Endothelial cell of umbilical vein (primary cell): ENCODE measurements at regions of chr18 and their contacts with region 1.

Region 1: DNA sequence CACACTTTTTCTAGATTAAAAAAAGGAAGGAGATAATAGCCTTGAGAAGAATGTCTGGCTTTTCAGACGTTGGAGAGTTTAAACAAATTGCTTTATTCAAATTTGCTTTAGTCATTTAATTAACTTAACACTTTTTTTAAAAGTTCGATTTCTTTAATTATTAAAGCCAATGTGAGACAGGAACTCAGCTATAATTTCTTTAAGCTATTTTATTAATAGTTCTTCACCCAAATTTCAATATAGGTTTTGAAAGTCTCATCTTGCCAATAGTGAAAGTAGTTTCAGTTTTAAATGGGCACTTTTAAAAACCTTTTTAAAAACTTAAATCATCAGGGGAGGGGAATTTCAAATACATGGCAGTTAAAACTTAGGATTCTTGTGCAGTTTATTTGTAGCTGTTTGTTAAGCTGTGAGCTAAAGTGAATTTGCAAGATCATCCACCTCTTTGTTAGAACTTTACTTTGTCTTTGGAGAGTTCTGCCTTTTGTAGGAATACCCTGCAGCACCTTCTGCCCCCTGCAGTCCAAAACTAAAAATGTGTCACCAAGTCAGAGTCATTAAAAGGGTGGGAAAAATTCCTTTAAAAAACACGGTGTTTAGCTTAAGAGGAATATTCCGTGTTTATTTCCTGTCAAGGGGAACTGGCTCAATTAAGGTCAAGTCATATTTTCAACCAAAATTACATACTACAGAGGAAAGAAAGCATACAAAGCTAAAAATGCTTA is 4.6 kb downstream of the TGIF1 start:
- DNase-seq: peak; percentile 95
- H3K4me3 ChIP-seq: peak overlapping the region; percentile 43 to 92 (median 90)
- H3K27ac ChIP-seq: peak overlapping the region; percentile 98
- H3K4me1 ChIP-seq: peaks cover 54% of the 10 kb centered on the region
- H3K27me3 ChIP-seq: no peaks in the 10 kb centered on the region
- CTCF ChIP-seq: peak; percentile 51 to 60
- POLR2A ChIP-seq: no peak

Region 2: GRCh38 chr18:3281456-3282400 is 172.8 kb before region 1 on chr18:
- CTCF ChIA-PET with region 1: interaction called, 52 read pairs
- POLR2A ChIA-PET with region 1: no interaction called
- dilution Hi-C with region 1: no loop called
- intact Hi-C with region 1: loop called (anchors 1 kb)
- DNase-seq: peak; percentile 91
- H3K4me3 ChIP-seq: no peak overlapping the region
- H3K27ac ChIP-seq: peak overlapping the region; percentile 84
- H3K4me1 ChIP-seq: peaks cover 38% of the 10 kb centered on the region
- H3K27me3 ChIP-seq: no peaks in the 10 kb centered on the region
- CTCF ChIP-seq: peak; percentile 6 to 21
- POLR2A ChIP-seq: no peak

Region 3: GRCh38 chr18:3481696-3482210 is 27.2 kb after region 1 on chr18:
- CTCF ChIA-PET with region 1: interaction called, 17 read pairs
- POLR2A ChIA-PET with region 1: no interaction called
- dilution Hi-C with region 1: no loop called
- intact Hi-C with region 1: no loop called
- DNase-seq: peak; percentile 47
- H3K4me3 ChIP-seq: no peak overlapping the region
- H3K27ac ChIP-seq: no peak overlapping the region
- H3K4me1 ChIP-seq: peaks cover 4% of the 10 kb centered on the region
- H3K27me3 ChIP-seq: no peaks in the 10 kb centered on the region
- CTCF ChIP-seq: peak; percentile 53 to 55
- POLR2A ChIP-seq: no peak

Region 4: DNA sequence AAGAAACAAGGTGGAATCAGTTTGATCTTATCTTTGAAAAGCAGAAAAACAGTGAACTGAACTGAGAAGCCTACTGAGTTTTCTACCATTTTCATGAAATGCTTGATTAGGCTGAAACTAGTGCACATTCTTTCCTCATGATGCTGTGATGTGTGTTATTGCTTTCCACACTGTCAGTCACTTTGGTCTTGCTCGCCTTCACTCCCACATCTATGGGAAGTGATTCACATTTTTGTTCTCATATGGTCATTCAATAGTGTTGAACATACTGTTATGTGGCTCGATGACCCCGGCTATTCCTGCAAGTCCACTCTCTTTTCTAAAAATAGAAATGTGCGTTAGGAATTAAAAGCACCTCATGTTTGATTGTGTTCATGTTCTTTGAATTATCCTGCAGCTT is 125.2 kb after region 1 on chr18:
- CTCF ChIA-PET with region 1: interaction called, 61 read pairs
- POLR2A ChIA-PET with region 1: no interaction called
- dilution Hi-C with region 1: no loop called
- intact Hi-C with region 1: loop called (anchors 1 kb)
- DNase-seq: peak; percentile 92
- H3K4me3 ChIP-seq: no peak overlapping the region
- H3K27ac ChIP-seq: peak overlapping the region; percentile 73
- H3K4me1 ChIP-seq: peaks cover 8% of the 10 kb centered on the region
- H3K27me3 ChIP-seq: no peaks in the 10 kb centered on the region
- CTCF ChIP-seq: no peak
- POLR2A ChIP-seq: no peak

Region 5: DNA sequence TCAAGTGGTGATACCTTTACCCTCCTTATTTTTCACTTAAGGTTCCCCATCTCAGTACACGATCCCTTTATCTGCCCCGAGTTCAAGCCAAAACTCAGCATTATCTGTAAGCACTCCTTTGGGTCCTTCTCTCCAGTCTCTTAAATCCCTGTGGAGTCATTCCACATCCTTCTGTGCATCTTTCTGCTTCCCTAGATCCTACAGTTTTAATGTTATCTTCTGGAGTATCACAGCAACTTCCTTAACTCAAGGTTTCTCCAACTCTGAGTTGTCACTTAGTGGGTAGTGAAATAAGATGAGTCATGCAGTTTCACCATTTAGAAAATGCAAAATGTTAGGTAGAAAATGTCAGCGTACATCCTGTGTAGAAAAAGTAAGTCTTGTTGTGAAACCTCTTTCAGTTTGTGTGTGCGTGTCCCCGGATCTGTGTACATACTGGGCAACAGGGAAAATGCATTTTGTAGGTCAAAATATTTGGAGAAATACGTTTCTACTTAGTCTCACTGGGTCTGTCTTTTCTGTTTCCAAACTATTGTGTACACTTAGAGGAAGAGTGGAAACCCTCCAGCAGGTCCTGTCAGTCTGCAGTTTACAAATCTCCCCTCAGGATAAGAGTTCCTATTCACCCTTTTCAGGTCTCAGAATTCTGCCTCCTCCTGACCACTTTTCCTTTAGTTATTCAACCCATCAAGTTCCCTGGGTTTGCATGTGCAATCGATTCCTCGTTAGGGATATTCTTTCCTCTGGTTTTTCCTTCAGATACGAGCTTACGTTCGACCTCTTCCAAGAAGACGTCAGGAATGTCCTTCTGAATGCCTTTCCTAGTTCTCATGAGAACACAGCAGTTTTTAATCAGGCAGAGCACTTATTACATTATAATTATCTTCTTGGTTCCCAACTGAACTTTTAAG is 150.2 kb after region 1 on chr18:
- CTCF ChIA-PET with region 1: interaction called, 7 read pairs
- POLR2A ChIA-PET with region 1: interaction called, 15 read pairs
- dilution Hi-C with region 1: no loop called
- intact Hi-C with region 1: loop called (anchors 2 kb)
- DNase-seq: peak; percentile 90
- H3K4me3 ChIP-seq: peak overlapping the region; percentile 41 to 95 (median 83)
- H3K27ac ChIP-seq: peak overlapping the region; percentile 96
- H3K4me1 ChIP-seq: peaks cover 43% of the 10 kb centered on the region
- H3K27me3 ChIP-seq: no peaks in the 10 kb centered on the region
- CTCF ChIP-seq: no peak
- POLR2A ChIP-seq: peak; percentile 32